PC-3 (cell line): ENCODE measurements at regions of chr3 and their contacts with region 1.

Region 1: DNA sequence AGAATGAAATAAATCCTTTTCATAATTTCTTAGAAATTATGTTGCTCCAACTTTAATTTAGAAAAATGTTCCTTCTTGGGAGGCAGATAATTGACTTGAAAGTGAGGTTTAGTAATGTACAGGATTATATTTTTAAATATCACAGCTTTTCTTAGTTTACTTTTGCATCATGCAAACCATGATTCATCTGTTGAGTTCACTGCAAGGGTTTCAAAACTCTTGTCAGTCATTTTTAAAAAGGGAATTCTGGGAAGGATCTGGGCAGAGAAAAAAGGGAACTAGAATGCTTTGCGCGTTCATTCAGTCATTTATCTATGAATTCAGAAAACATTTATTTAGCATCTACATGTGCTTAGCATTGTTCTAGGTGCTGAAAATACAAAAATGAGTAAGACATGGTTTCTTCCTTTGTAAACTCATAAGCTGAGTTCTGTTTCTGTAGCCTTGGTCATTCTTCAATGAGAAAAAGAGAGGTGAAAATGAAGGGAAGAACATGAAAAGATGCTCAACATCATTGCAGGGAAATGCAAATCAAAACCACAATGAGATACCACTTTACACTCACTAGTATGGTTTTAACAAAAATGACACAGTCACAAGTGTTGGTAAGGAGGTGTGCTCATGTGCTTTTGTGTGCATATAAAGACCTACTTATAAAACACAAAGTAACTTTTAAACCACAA is 209.1 kb downstream of the NR1D2 start:
- DNase-seq: no peak
- ATAC-seq: no peak
- H3K4me3 ChIP-seq: no peak overlapping the region
- H3K27ac ChIP-seq: no peak overlapping the region
- H3K4me1 ChIP-seq: peaks cover 43% of the 10 kb centered on the region
- H3K27me3 ChIP-seq: no peaks in the 10 kb centered on the region
- CTCF ChIP-seq: no peak

Region 2: GRCh38 chr3:24420224-24420623 is 266.1 kb after region 1 on chr3:
- CTCF ChIA-PET with region 1: no interaction called
- POLR2A ChIA-PET with region 1: no interaction called
- intact Hi-C with region 1: loop called (anchors 10 kb)
- DNase-seq: no peak
- ATAC-seq: no peak
- H3K4me3 ChIP-seq: no peak overlapping the region
- H3K27ac ChIP-seq: no peak overlapping the region
- H3K4me1 ChIP-seq: no peaks in the 10 kb centered on the region
- H3K27me3 ChIP-seq: no peaks in the 10 kb centered on the region
- CTCF ChIP-seq: no peak